ENCODE measurements at regions of chr7 and their contacts with region 1.

Region 1: GRCh38 chr7:99733448-99733847 is 1.5 kb downstream of the CYP3A7 start:
- DNase-seq: no peak
- ATAC-seq: no peak
- H3K4me3 ChIP-seq: no peak overlapping the region
- H3K27ac ChIP-seq: no peak overlapping the region
- H3K4me1 ChIP-seq: no peaks in the 10 kb centered on the region
- H3K27me3 ChIP-seq: no peaks in the 10 kb centered on the region
- CTCF ChIP-seq: peak in 2 of 9 donors; percentile 12 to 32

Region 2: DNA sequence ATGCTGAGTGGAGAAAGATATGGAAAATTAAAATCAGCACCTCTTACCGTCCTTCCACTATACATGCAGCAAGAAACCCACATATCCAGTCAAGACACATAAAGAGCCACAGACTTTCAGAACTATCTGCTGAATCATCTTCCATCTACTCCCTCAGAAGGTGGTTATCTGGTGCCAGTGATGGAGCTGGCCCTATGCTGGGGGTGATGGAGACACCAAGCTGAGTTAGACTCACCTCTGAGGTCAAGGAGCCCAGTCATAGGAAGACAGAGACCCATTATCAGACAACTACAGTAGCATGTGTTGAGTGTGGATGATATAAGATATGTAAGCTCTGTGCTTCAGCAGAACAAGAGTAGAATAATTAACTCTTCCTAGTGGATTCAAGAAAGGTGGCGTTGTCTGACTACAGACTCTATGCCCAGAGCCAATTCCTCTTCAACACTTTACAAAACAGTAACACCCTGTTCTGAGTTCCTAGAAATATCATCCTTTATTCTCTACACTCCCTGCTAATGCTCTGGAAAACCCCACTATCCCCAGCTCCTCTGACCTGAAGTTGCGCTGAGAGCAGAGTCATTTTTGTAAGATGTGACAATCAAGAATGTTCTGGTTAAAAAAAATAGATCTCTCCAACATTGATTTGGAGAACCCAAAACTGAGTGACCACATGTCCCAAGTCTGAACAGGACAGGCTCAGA is 68.0 kb before region 1 on chr7:
- intact Hi-C with region 1: loop called in 1 of 10 experiments (anchors 10 kb)
- DNase-seq: no peak
- ATAC-seq: no peak
- H3K4me3 ChIP-seq: no peak overlapping the region
- H3K27ac ChIP-seq: no peak overlapping the region
- H3K4me1 ChIP-seq: peaks cover 0 to 7% (median 0%) of the 10 kb centered on the region in 9 donors
- H3K27me3 ChIP-seq: no peaks in the 10 kb centered on the region
- CTCF ChIP-seq: no peak

Region 3: DNA sequence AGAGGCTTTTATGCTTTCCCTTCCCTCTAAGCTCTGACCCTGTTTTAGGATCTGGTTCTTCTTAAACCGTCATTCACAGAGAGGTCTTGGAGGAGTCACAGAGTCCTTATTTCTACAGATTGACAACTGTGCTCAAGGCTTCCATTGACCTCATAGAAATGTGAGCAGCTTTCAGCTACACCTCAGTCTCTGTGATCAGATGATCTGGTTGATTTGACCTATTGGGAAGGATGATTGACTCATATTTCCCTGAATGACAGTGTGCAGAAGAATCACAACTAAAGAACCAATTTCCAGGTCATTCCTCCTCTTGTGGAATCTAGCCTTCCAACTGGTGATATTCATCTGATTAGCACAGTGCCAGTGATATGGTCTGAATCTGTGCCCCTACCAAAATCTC is 47.1 kb after region 1 on chr7:
- intact Hi-C with region 1: loop called in 1 of 10 experiments (anchors 2 kb)
- DNase-seq: no peak
- ATAC-seq: no peak
- H3K4me3 ChIP-seq: no peak overlapping the region
- H3K27ac ChIP-seq: no peak overlapping the region
- H3K4me1 ChIP-seq: no peaks in the 10 kb centered on the region
- H3K27me3 ChIP-seq: peaks cover 0 to 4% (median 0%) of the 10 kb centered on the region in 7 donors
- CTCF ChIP-seq: no peak

Region 4: DNA sequence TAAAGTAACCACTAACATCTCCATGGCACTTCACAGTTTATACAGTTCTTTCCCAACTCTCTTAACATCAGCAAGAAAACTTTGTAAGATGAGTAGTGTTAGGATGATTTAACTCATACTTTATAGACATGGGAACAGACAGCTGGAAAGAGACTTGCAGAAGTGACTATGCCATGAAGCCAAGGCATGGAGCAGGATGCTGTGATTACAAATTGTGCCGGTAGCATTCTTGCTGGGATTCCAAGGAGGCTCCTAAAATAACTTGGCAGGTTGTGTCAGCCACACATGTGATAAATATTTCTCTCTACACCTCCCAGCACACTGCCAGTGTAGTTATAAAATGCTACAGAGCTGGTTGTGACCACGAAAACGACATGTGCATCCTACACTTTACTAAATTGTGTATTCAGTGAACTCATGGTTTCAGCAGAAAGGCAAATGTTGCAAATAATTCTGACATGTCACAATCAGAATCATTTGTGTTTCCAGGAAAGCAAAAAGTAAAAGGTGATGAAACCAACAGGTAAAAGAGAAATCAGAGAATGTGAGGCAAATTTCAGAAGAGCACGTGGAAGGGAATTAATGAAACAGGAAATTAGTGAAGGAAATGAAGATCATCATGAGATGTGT is 56.1 kb after region 1 on chr7:
- intact Hi-C with region 1: loop called in 1 of 10 experiments (anchors 2 kb)
- DNase-seq: no peak
- ATAC-seq: no peak
- H3K4me3 ChIP-seq: no peak overlapping the region
- H3K27ac ChIP-seq: no peak overlapping the region
- H3K4me1 ChIP-seq: no peaks in the 10 kb centered on the region
- H3K27me3 ChIP-seq: peaks cover 0 to 10% (median 0%) of the 10 kb centered on the region in 7 donors
- CTCF ChIP-seq: no peak

Region 5: GRCh38 chr7:99881370-99881769 is 147.9 kb after region 1 on chr7:
- intact Hi-C with region 1: no loop called
- DNase-seq: no peak
- ATAC-seq: no peak
- H3K4me3 ChIP-seq: no peak overlapping the region
- H3K27ac ChIP-seq: no peak overlapping the region
- H3K4me1 ChIP-seq: no peaks in the 10 kb centered on the region
- H3K27me3 ChIP-seq: no peaks in the 10 kb centered on the region
- CTCF ChIP-seq: no peak